ENCODE measurements at regions of chr19 and their contacts with region 1.

Region 1: DNA sequence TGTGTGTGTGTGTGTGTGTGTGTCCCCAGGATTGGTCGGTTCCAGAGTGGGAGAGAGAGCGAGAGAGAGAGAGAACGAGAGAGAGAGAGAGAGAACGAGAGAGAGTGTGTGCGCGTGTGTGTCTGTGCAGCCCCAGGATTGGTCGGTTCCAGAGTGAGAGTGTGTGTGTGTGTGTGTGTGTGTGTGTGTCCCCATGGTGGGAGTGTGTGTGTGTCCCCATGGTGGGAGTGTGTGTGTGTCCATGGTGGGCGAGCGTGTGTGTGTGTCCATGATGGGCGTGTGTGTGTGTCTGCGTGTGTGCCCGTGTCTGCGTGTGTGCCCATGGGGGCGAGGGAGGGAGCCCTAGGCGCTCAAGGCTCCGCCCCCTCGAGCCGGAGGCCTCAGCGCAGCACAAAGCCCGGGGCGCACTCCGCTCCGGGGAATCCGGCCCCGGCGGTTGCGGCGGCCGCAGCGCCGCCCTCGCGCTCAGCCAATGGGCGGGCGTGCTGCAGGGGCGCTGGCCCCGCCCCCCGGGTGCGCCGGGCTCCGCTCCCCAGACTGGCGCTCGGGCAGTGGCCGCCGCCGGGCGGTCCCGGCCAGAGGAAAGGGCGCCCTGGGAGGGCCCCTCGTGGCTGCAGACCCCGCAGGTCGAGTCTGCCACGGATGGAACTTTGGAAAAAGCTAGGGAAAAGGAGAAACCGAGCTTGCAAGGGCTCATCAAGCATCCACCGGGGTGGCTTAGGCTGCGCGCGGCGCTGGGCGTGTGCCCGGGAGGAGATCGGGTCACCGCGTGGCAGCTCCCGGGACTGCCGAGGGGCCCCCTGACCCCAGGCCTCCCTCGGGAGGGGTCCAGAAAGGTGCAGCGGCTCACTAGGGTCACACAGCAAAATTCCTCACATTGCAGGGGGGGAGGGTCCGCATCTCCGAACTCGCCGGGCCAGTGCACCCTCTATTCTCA is 96.2 kb downstream of the INSR start:
- DNase-seq: peak; percentile 62 to 86
- H3K4me3 ChIP-seq: peak overlapping the region; percentile 69
- H3K27ac ChIP-seq: peak overlapping the region; percentile 26; the same call in 1 of the 2 replicates
- H3K4me1 ChIP-seq: 0 out of 2 replicates have a peak, but pooled peaks cover 3% of the 10 kb centered on the region
- H3K27me3 ChIP-seq: no peaks in the 10 kb centered on the region
- CTCF ChIP-seq: no peak

Region 2: DNA sequence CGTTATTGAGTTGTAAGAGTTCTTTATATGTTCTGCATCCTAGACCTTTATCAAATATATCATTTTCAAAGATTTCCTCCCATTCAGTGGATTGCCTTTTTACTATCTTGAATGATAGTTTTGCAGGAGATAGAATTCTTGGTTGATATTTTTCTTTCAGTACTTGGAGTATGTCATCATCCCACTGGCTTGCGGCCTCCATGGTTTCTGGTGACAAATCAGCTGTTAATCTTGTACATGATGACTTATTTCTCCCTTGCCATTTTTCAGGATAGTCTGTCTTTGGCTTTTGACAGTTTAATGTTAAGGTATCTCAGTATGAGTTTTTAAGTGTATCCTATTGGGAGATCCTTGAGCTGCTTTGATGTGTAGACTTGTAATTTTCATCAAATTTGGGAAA is 120.0 kb before region 1 on chr19:
- CTCF ChIA-PET with region 1: no interaction called
- POLR2A ChIA-PET with region 1: no interaction called
- intact Hi-C with region 1: no loop called
- DNase-seq: no peak
- H3K4me3 ChIP-seq: no peak overlapping the region
- H3K27ac ChIP-seq: no peak overlapping the region
- H3K4me1 ChIP-seq: no peaks in the 10 kb centered on the region
- H3K27me3 ChIP-seq: no peaks in the 10 kb centered on the region
- CTCF ChIP-seq: no peak

Region 3: GRCh38 chr19:7293795-7294570 is 96.0 kb after region 1 on chr19 and contains the start of gene INSR:
- CTCF ChIA-PET with region 1: no interaction called
- POLR2A ChIA-PET with region 1: interaction called, 9 read pairs
- intact Hi-C with region 1: loop called (anchors 1 kb)
- DNase-seq: peak; percentile 70 to 84
- H3K4me3 ChIP-seq: peak within 1 kb of the TSS; percentile 67
- H3K27ac ChIP-seq: no peak within 1 kb of the TSS
- H3K4me1 ChIP-seq: no peaks in the 10 kb centered on the region
- H3K27me3 ChIP-seq: no peaks in the 10 kb centered on the region
- CTCF ChIP-seq: no peak
- total RNA-seq, gene INSR: 9.3 and 18.9 TPM in 2 replicates

Region 4: DNA sequence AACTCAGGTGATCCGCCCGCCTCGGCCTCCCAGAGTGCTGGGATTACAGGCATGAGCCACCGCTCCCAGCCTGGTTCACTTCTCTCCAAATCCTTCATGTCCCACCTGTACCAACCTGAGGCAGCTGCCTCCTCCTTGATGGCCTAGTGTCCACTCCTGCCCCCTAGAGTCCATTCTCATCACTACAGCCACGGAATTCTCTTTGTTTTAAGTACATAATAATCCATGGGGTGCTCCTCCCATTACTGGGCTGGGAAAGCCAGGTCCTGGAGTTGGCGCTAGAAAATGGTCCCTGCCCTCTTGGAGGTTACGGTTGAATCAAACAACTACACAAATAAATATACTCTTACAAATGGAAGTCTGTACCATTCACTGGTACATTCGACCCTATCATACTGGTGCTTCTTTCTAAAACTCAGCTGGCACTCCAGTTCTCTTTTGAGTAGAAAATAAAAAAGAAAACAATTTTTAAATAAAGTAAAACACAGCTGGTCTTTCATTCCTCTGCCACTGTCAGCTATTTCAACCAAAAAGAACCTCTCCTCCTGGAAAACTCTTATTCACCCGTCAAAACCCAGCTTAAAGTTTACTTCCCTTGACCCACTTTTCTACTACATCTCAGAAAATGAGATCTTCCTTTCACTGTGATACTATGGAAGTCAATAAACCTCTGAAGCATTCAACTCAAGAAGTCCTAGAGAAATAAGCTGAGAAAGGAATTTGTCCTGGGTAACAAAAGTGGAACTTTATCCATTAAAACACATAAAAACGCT is 128.3 kb after region 1 on chr19:
- CTCF ChIA-PET with region 1: interaction called, 10 read pairs
- POLR2A ChIA-PET with region 1: no interaction called
- intact Hi-C with region 1: no loop called
- DNase-seq: no peak
- H3K4me3 ChIP-seq: no peak overlapping the region
- H3K27ac ChIP-seq: no peak overlapping the region
- H3K4me1 ChIP-seq: no peaks in the 10 kb centered on the region
- H3K27me3 ChIP-seq: 0 out of 2 replicates have a peak, but pooled peaks cover 1% of the 10 kb centered on the region
- CTCF ChIP-seq: peak; percentile 65

Measured in PC-9 (cell line).